ENCODE measurements at regions of chr3 and their contacts with region 1.

Region 1: DNA sequence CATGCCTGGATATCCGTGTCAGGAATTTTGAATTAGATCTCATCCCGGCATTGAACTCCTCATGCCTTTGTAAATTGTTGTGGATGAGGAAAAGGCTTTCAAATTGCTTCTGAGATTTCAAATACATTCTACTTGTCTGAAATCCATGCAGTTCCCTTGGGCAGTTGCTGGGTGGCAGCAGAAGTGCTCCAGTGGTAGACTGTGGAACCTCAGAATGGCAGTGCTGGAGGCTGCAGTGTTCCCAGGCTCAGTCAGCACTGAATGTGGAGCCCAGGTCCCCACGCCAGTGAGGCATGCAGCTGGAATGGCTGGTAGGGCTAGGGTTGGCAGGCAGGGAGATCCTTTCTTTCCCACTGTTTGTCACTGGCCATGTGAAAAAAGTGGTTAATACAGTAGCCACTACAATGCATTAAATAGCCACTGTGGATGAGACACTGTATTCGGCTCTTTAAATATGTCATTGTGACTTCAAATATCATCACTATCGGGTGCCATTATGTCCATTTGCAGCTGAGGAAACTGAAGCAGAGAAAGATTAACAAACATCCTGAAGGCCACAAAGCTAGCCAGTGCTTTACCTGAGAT is 98.6 kb downstream of the TPRG1 start:
- DNase-seq: peak; percentile 32 to 77
- ATAC-seq: peak; percentile 90 to 98 (median 96)
- H3K4me3 ChIP-seq: no peak overlapping the region
- H3K27ac ChIP-seq: peak overlapping the region; percentile 53
- H3K4me1 ChIP-seq: peaks cover 29% of the 10 kb centered on the region
- H3K27me3 ChIP-seq: no peaks in the 10 kb centered on the region
- CTCF ChIP-seq: peak; percentile 65

Region 2: GRCh38 chr3:189204184-189204866 is 66.0 kb before region 1 on chr3:
- intact Hi-C with region 1: no loop called
- DNase-seq: no peak
- ATAC-seq: no peak
- H3K4me3 ChIP-seq: no peak overlapping the region
- H3K27ac ChIP-seq: no peak overlapping the region
- H3K4me1 ChIP-seq: peaks cover 7% of the 10 kb centered on the region
- H3K27me3 ChIP-seq: no peaks in the 10 kb centered on the region
- CTCF ChIP-seq: no peak

Region 3: DNA sequence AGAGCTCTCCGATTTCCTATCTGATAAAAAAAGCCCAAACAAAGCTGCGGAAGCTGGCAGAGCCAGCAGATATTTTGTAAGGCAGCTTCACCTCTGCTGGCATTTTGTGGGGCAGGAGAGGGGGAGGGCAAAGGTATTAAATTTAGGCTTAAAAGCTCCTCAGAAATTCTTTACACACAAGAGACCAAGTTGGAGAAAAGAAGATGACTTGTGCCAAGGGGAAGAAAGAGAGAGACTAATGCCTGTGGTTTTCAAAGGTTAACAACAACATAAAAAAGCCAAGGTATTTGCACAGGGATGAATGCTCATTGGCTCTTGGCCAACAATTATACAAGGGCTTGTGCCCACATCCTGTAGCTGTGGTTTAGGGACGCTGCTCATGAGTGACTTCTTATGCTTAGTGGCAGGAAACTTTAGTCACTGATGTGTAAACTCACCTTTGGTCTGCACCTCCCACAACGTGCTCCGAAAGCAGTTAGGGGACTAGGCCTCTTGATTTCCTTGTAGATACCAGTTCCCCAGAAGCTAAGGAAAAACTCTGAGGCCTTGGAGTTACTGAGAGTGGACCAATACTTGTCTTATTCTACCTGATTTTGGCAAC is 54.3 kb after region 1 on chr3:
- intact Hi-C with region 1: loop called in 1 of 2 experiments (anchors 5 kb)
- DNase-seq: peak in 1 of 2 donors; percentile 45
- ATAC-seq: peak; percentile 78 to 96 (median 90)
- H3K4me3 ChIP-seq: no peak overlapping the region
- H3K27ac ChIP-seq: peak overlapping the region; percentile 84
- H3K4me1 ChIP-seq: peaks cover 39% of the 10 kb centered on the region
- H3K27me3 ChIP-seq: no peaks in the 10 kb centered on the region
- CTCF ChIP-seq: no peak

Region 4: DNA sequence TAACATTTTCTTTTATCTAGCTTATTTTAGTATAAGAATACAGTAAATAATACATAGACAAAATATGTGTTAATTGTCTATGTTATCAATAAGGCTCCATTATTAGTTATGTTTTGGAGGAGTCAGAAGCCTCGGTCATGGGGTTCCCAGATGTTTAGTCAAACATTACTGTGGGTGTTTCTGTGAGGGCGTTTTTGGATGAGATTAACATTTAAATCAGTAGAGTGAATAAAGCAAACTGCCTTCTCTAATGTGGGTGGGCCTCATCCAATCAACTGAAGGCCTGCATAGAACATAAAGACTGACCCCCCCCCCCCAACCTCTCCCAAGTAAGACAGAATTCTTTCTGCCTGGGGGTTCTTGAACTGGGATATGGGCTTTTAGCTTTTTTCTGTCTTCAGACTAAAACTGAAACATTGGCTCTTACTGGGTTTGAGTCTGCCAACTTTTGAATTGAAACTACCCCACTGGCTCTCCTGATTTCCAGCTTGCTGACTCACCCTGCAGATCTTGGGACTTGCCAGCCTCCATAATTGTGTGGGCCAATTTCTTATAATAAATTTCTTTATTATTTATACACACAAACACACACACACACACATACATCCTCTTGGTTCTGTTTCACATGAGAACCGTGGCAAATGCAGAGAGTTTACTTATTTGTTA is 93.4 kb after region 1 on chr3:
- intact Hi-C with region 1: loop called in 1 of 2 experiments (anchors 5 kb)
- DNase-seq: no peak
- ATAC-seq: peak in 1 of 4 donors; percentile 48
- H3K4me3 ChIP-seq: no peak overlapping the region
- H3K27ac ChIP-seq: peak overlapping the region; percentile 83
- H3K4me1 ChIP-seq: peaks cover 64% of the 10 kb centered on the region
- H3K27me3 ChIP-seq: no peaks in the 10 kb centered on the region
- CTCF ChIP-seq: no peak

Region 5: GRCh38 chr3:189563866-189564563 is 293.7 kb after region 1 on chr3:
- intact Hi-C with region 1: loop called in 1 of 2 experiments (anchors 10 kb)
- DNase-seq: no peak
- ATAC-seq: peak; percentile 79 to 97 (median 92)
- H3K4me3 ChIP-seq: no peak overlapping the region
- H3K27ac ChIP-seq: peak overlapping the region; percentile 74
- H3K4me1 ChIP-seq: peaks cover 4% of the 10 kb centered on the region
- H3K27me3 ChIP-seq: no peaks in the 10 kb centered on the region
- CTCF ChIP-seq: no peak

Region 6: GRCh38 chr3:189947948-189948723 is 677.8 kb after region 1 on chr3:
- intact Hi-C with region 1: loop called (anchors 5 kb)
- DNase-seq: no peak
- ATAC-seq: peak; percentile 42 to 78 (median 62)
- H3K4me3 ChIP-seq: no peak overlapping the region
- H3K27ac ChIP-seq: no peak overlapping the region
- H3K4me1 ChIP-seq: peaks cover 3% of the 10 kb centered on the region
- H3K27me3 ChIP-seq: no peaks in the 10 kb centered on the region
- CTCF ChIP-seq: peak; percentile 58

Measured in psoas muscle (tissue), 8 donors.